OCI-LY7 (cell line): ENCODE measurements at regions of chr1 and their contacts with region 1.

Region 1: GRCh38 chr1:56397811-56398231 is 181.5 kb downstream of the PLPP3 start:
- DNase-seq: no peak
- H3K4me3 ChIP-seq: no peak overlapping the region
- H3K27ac ChIP-seq: no peak overlapping the region
- H3K4me1 ChIP-seq: peaks cover 12% of the 10 kb centered on the region
- CTCF ChIP-seq: no peak

Region 2: DNA sequence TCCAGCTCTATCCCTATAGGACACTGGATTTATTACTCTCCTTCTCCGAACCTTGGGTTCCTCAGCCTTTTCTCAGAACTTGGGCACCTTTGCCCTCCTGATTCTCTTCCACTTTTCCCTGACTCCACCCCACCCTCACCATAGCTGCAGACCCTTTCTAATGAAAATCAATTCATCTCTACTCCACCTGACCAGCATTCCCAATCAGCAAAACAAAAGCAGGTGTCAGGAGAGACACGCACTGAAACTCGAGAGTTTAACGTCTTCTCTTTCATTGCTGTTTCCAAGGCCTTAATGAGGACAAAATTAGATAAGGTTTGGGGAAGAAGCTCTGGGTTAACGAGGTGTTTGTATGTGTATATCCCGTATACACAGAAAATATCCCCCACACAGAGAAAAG is 27.3 kb before region 1 on chr1:
- CTCF ChIA-PET with region 1: no interaction called
- POLR2A ChIA-PET with region 1: interaction called, 14 read pairs
- intact Hi-C with region 1: no loop called
- DNase-seq: no peak
- H3K4me3 ChIP-seq: no peak overlapping the region
- H3K27ac ChIP-seq: no peak overlapping the region
- H3K4me1 ChIP-seq: no peaks in the 10 kb centered on the region
- CTCF ChIP-seq: no peak